Activated CD4-positive, alpha-beta memory T cell treated with anti-CD3 and anti-CD28 coated beads for 36 hours (primary cell): ENCODE measurements at regions of chr3 and their contacts with region 1.

Region 1: GRCh38 chr3:27454914-27455313 is 29.3 kb downstream of the SLC4A7 start:
- DNase-seq: no peak
- H3K4me3 Mint-ChIP-seq: peak overlapping the region; percentile 10
- H3K27ac Mint-ChIP-seq: peak overlapping the region; percentile 58
- H3K4me1 Mint-ChIP-seq: peaks cover 62% of the 10 kb centered on the region
- H3K27me3 Mint-ChIP-seq: no peaks in the 10 kb centered on the region

Region 2: DNA sequence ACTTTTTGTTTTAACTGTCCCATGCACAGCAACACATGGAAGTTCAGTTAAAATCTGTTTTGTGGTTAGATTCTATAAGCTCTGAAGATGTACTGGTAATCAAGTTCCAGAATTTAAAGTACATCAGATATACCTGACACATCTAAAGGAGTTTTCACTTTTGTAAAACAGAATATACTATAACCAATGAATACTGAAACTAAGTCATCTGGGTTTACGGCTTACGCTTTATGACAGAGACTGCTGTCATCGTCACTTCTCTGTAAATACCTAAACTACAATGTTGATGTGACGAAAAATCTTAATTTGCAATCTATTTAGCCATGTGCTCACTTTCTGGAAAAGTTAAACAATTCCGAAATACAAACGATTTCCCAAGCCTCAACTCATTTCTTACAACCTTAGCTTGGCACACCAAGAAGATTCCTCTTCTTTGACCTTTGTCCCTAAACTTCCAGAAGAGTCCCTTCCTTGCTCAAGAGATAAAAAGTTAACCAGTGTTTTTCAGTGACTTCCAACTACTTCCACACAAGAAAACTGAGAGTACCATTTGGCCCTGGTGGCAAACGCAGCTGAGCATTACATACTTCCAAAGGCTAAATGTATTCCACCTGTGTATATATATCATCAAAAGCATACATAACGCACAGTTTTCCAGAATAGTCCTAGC is 28.9 kb before region 1 on chr3:
- CTCF ChIA-PET with region 1: interaction called, 3 read pairs
- POLR2A ChIA-PET with region 1: no interaction called
- intact Hi-C with region 1: loop called (anchors 2 kb)
- DNase-seq: no peak
- H3K4me3 Mint-ChIP-seq: no peak overlapping the region
- H3K27ac Mint-ChIP-seq: no peak overlapping the region
- H3K4me1 Mint-ChIP-seq: peaks cover 17% of the 10 kb centered on the region
- H3K27me3 Mint-ChIP-seq: no peaks in the 10 kb centered on the region